Naive thymus-derived CD4-positive, alpha-beta T cell (primary cell): ENCODE measurements at regions of chr5 and their contacts with region 1.

Region 1: GRCh38 chr5:103258368-103258956 is at the start of gene MACIR:
- DNase-seq: peak; percentile 82 to 91 (median 87)
- ATAC-seq: peak; percentile 96
- H3K4me3 ChIP-seq: peak within 1 kb of the TSS; percentile 79
- H3K4me3 Mint-ChIP-seq: peak within 1 kb of the TSS; percentile 79 to 94 (median 88)
- H3K27ac ChIP-seq: peak within 1 kb of the TSS; percentile 63
- H3K27ac Mint-ChIP-seq: peak within 1 kb of the TSS; percentile 54 to 91 (median 82)
- H3K4me1 ChIP-seq: no peaks in the 10 kb centered on the region
- H3K4me1 Mint-ChIP-seq: peaks cover 10 to 25% (median 15%) of the 10 kb centered on the region in 7 donors
- H3K27me3 ChIP-seq: no peaks in the 10 kb centered on the region
- H3K27me3 Mint-ChIP-seq: peaks cover 0 to 32% (median 12%) of the 10 kb centered on the region in 5 donors
- total RNA-seq, gene MACIR: 2.0 to 6.1 (median 2.7) TPM

Region 2: GRCh38 chr5:102755686-102756371 is 502.6 kb before region 1 on chr5:
- CTCF ChIA-PET with region 1: no interaction called
- POLR2A ChIA-PET with region 1: no interaction called
- intact Hi-C with region 1: loop called (anchors 1 to 2 kb)
- DNase-seq: peak; percentile 22 to 70 (median 39)
- ATAC-seq: peak; percentile 86
- H3K4me3 ChIP-seq: peak overlapping the region; percentile 83
- H3K4me3 Mint-ChIP-seq: peak overlapping the region; percentile 90 to 99 (median 94)
- H3K27ac ChIP-seq: peak overlapping the region; percentile 64
- H3K27ac Mint-ChIP-seq: peak overlapping the region; percentile 57 to 95 (median 91)
- H3K4me1 ChIP-seq: peaks cover 11 to 16% of the 10 kb centered on the region in 2 donors
- H3K4me1 Mint-ChIP-seq: peaks cover 22 to 45% (median 40%) of the 10 kb centered on the region in 7 donors
- H3K27me3 ChIP-seq: no peaks in the 10 kb centered on the region
- H3K27me3 Mint-ChIP-seq: peaks cover 0 to 15% (median under 1%) of the 10 kb centered on the region in 5 donors

Region 3: DNA sequence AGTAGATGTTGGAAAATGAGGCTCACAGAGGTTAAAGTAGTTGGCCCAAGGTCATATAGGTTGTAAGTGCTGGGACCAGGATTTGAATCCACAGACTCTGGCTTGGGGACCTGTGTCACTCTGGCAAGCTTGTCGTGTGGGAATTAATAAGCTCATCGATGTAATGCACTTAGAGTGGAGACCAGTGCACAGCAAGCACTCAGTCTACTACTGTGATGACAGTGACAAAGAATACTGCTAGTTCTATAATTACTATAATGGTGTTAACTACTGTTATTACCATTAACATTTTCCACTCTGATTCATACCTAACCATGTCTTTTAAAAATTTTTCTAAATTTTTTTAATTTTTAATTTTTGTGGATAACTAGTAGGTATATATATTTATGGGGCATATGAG is 490.6 kb before region 1 on chr5:
- CTCF ChIA-PET with region 1: no interaction called
- POLR2A ChIA-PET with region 1: no interaction called
- intact Hi-C with region 1: no loop called
- DNase-seq: no peak
- ATAC-seq: no peak
- H3K4me3 ChIP-seq: no peak overlapping the region
- H3K4me3 Mint-ChIP-seq: no peak overlapping the region
- H3K27ac ChIP-seq: no peak overlapping the region
- H3K27ac Mint-ChIP-seq: no peak overlapping the region
- H3K4me1 ChIP-seq: peaks cover 5 to 35% of the 10 kb centered on the region in 2 donors
- H3K4me1 Mint-ChIP-seq: peaks cover 25 to 52% (median 37%) of the 10 kb centered on the region in 7 donors
- H3K27me3 ChIP-seq: no peaks in the 10 kb centered on the region
- H3K27me3 Mint-ChIP-seq: no peaks in the 10 kb centered on the region

Region 4: GRCh38 chr5:103211576-103212561 is 46.6 kb before region 1 on chr5:
- CTCF ChIA-PET with region 1: no interaction called
- POLR2A ChIA-PET with region 1: no interaction called
- intact Hi-C with region 1: loop called in 1 of 2 experiments (anchors 1 kb)
- DNase-seq: no peak
- ATAC-seq: peak; percentile 12
- H3K4me3 ChIP-seq: no peak overlapping the region
- H3K4me3 Mint-ChIP-seq: peak overlapping the region in 4 of 10 donors; percentile 7 to 71 (median 21)
- H3K27ac ChIP-seq: no peak overlapping the region
- H3K27ac Mint-ChIP-seq: peak overlapping the region in 4 of 9 donors; percentile 41 to 69 (median 56)
- H3K4me1 ChIP-seq: peaks cover 0 to 7% of the 10 kb centered on the region in 2 donors
- H3K4me1 Mint-ChIP-seq: peaks cover 10 to 31% (median 14%) of the 10 kb centered on the region in 7 donors
- H3K27me3 ChIP-seq: no peaks in the 10 kb centered on the region
- H3K27me3 Mint-ChIP-seq: no peaks in the 10 kb centered on the region

Region 5: DNA sequence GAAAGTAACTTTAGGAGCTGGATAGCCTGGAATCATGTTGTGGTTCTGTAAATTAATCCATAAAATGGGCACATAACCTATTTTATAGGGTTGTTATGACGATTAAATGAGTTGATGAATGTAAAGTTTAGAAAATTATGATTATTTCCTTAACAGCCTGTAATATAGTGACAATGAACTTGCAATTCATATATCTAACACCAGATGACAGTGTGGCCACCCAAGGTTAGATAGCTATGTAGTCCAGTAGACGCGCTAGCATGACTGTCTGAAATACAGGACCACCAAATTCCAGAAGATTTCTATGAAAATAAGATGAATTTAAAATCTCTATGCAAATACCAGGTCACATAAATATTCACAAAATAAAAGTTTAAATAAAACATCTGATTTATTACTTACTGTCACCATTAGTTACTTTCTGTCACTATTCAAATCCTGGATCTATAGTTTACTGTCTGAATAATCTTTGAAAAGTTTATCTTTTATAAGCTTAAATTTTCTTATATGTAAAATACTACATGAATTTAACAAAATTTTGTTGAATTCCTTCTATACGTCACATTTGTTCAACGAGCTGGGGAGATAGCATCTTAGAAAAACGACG is 26.0 kb before region 1 on chr5:
- CTCF ChIA-PET with region 1: interaction called, 8 read pairs
- POLR2A ChIA-PET with region 1: interaction called, 3 read pairs
- intact Hi-C with region 1: loop called in 1 of 2 experiments (anchors 1 kb)
- DNase-seq: peak in 7 of 9 donors; percentile 14 to 38 (median 23)
- ATAC-seq: peak; percentile 81
- H3K4me3 ChIP-seq: no peak overlapping the region
- H3K4me3 Mint-ChIP-seq: no peak overlapping the region
- H3K27ac ChIP-seq: no peak overlapping the region
- H3K27ac Mint-ChIP-seq: no peak overlapping the region
- H3K4me1 ChIP-seq: no peaks in the 10 kb centered on the region
- H3K4me1 Mint-ChIP-seq: no peaks in the 10 kb centered on the region
- H3K27me3 ChIP-seq: no peaks in the 10 kb centered on the region
- H3K27me3 Mint-ChIP-seq: peaks cover 2 to 41% (median 14%) of the 10 kb centered on the region in 5 donors